ENCODE measurements at regions of chr4 and their contacts with region 1.

Region 1: DNA sequence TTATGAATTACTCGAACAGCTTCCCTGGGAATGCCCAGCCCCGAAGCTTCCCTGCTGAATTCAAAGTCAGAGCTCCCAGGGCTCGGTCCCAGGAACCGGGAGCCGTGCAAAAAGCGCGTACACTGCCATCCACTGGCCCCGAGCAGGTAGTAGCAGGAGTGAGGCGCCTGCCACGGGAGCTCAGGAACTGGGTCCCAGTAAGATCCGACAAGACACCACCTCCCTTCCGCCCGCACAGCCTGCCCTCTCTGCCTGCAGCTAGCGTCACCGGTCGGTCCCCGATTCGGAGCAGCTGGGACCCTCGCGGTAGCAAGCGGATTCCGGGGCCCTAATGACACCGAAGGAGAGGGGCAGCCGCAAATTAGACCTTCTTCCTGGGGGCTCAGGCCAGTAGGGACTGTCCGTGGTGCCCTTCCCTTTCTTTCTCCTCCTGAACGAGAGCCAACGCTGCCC is 1.2 kb downstream of the CORIN start:
- DNase-seq: peak; percentile 30 to 66 (median 41)
- H3K4me3 ChIP-seq: peak overlapping the region; percentile 54 to 81
- H3K4me3 Mint-ChIP-seq: peak overlapping the region; percentile 87 to 93 (median 89)
- H3K27ac ChIP-seq: no peak overlapping the region
- H3K27ac Mint-ChIP-seq: peak overlapping the region; percentile 4 to 75 (median 48)
- H3K4me1 ChIP-seq: peaks cover 25% of the 10 kb centered on the region
- H3K4me1 Mint-ChIP-seq: peaks cover 14 to 47% (median 20%) of the 10 kb centered on the region in 4 donors
- H3K27me3 ChIP-seq: no peaks in the 10 kb centered on the region
- H3K27me3 Mint-ChIP-seq: no peaks in the 10 kb centered on the region

Region 2: GRCh38 chr4:47668810-47669408 is 167.8 kb before region 1 on chr4:
- CTCF ChIA-PET with region 1: interaction called, 19 read pairs
- POLR2A ChIA-PET with region 1: no interaction called
- intact Hi-C with region 1: loop called (anchors 1 kb)
- DNase-seq: peak in 4 of 5 donors; percentile 24 to 33 (median 28)
- H3K4me3 ChIP-seq: no peak overlapping the region
- H3K4me3 Mint-ChIP-seq: no peak overlapping the region
- H3K27ac ChIP-seq: no peak overlapping the region
- H3K27ac Mint-ChIP-seq: no peak overlapping the region
- H3K4me1 ChIP-seq: no peaks in the 10 kb centered on the region
- H3K4me1 Mint-ChIP-seq: peaks cover 0 to 2% (median 1%) of the 10 kb centered on the region in 4 donors
- H3K27me3 ChIP-seq: no peaks in the 10 kb centered on the region
- H3K27me3 Mint-ChIP-seq: peaks cover 7 to 18% of the 10 kb centered on the region in 2 donors

Region 3: DNA sequence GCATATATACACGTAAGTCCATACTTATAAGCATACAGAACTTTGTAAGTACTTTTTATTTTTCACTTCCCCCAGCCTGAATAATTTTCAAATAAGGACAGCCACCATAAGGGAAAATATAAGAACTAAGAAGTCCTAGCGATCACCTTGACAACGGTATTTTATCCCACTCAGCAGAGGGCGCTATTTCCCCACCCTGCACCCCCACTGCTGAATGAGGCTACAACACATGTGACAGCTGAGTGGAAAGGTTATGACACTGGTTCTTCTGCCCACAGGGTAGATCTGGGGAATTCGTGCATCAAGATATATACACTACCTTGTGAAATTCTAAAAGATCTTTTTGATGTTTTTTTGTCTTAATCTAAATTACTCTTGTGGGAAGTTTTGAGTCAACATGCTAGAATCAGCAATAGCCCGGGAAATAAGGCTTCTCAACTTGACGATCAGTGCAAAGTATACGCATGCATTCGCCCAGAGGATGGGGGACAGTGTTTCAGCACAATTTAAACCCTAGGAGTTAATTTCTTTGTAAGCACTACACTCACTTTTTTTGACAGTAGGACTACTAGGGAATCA is 150.3 kb before region 1 on chr4:
- CTCF ChIA-PET with region 1: interaction called, 53 read pairs
- POLR2A ChIA-PET with region 1: interaction called, 3 read pairs
- intact Hi-C with region 1: loop called (anchors 1 kb)
- DNase-seq: peak; percentile 53 to 64 (median 61)
- H3K4me3 ChIP-seq: no peak overlapping the region
- H3K4me3 Mint-ChIP-seq: no peak overlapping the region
- H3K27ac ChIP-seq: no peak overlapping the region
- H3K27ac Mint-ChIP-seq: no peak overlapping the region
- H3K4me1 ChIP-seq: no peaks in the 10 kb centered on the region
- H3K4me1 Mint-ChIP-seq: peaks cover 0 to 3% (median 0%) of the 10 kb centered on the region in 4 donors
- H3K27me3 ChIP-seq: no peaks in the 10 kb centered on the region
- H3K27me3 Mint-ChIP-seq: peaks cover 4% of the 10 kb centered on the region in 2 donors

Region 4: GRCh38 chr4:47704693-47705325 is 131.9 kb before region 1 on chr4:
- CTCF ChIA-PET with region 1: interaction called, 8 read pairs
- POLR2A ChIA-PET with region 1: no interaction called
- intact Hi-C with region 1: loop called (anchors 1 kb)
- DNase-seq: no peak
- H3K4me3 ChIP-seq: no peak overlapping the region
- H3K4me3 Mint-ChIP-seq: no peak overlapping the region
- H3K27ac ChIP-seq: no peak overlapping the region
- H3K27ac Mint-ChIP-seq: peak overlapping the region in 1 of 7 donors; percentile 79
- H3K4me1 ChIP-seq: no peaks in the 10 kb centered on the region
- H3K4me1 Mint-ChIP-seq: peaks cover 0 to 5% (median 2%) of the 10 kb centered on the region in 4 donors
- H3K27me3 ChIP-seq: no peaks in the 10 kb centered on the region
- H3K27me3 Mint-ChIP-seq: peaks cover 3 to 20% of the 10 kb centered on the region in 2 donors

Region 5: DNA sequence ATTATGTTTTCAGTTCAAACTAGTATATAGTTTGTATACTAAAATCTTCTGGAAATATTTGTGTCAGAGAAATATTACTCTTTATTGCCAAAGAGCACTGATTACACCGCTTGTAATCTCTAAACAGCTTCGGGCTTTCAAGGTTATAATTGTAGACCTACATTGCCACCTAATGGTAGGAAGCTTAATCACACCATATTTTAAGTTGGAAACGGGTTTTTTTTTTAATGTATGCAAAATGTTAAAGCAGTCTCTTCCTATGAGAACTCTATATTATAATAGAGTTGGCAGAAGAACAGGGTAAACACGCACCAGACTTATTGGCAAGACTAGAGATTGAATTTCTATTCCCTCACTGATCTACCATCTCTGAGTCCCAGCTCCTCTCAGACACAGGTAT is 97.2 kb after region 1 on chr4:
- CTCF ChIA-PET with region 1: interaction called, 8 read pairs
- POLR2A ChIA-PET with region 1: interaction called, 3 read pairs
- intact Hi-C with region 1: loop called (anchors 2 kb)
- DNase-seq: peak in 4 of 5 donors; percentile 41 to 53 (median 50)
- H3K4me3 ChIP-seq: no peak overlapping the region
- H3K4me3 Mint-ChIP-seq: no peak overlapping the region
- H3K27ac ChIP-seq: no peak overlapping the region
- H3K27ac Mint-ChIP-seq: no peak overlapping the region
- H3K4me1 ChIP-seq: no peaks in the 10 kb centered on the region
- H3K4me1 Mint-ChIP-seq: peaks cover 5 to 7% (median 6%) of the 10 kb centered on the region in 4 donors
- H3K27me3 ChIP-seq: no peaks in the 10 kb centered on the region
- H3K27me3 Mint-ChIP-seq: peaks cover 0 to 1% of the 10 kb centered on the region in 2 donors